CD8-positive, alpha-beta T cell (primary cell): ENCODE measurements at regions of chr6 and their contacts with region 1.

Region 1: GRCh38 chr6:44074439-44075136 is 52.7 kb downstream of the MRPL14 start:
- DNase-seq: peak; percentile 27 to 84 (median 67)
- ATAC-seq: peak; percentile 50
- H3K4me3 ChIP-seq: peak overlapping the region in 1 of 2 experiments; percentile 44
- H3K4me3 Mint-ChIP-seq: peak overlapping the region; percentile 98
- H3K27ac ChIP-seq: no peak overlapping the region
- H3K27ac Mint-ChIP-seq: no peak overlapping the region
- H3K4me1 ChIP-seq: peaks cover 19% of the 10 kb centered on the region
- H3K4me1 Mint-ChIP-seq: peaks cover 19% of the 10 kb centered on the region
- H3K27me3 ChIP-seq: peaks cover 0 to 3% of the 10 kb centered on the region in 2 experiments
- H3K27me3 Mint-ChIP-seq: peaks cover 25% of the 10 kb centered on the region
- CTCF ChIP-seq: peak; percentile 80

Region 2: DNA sequence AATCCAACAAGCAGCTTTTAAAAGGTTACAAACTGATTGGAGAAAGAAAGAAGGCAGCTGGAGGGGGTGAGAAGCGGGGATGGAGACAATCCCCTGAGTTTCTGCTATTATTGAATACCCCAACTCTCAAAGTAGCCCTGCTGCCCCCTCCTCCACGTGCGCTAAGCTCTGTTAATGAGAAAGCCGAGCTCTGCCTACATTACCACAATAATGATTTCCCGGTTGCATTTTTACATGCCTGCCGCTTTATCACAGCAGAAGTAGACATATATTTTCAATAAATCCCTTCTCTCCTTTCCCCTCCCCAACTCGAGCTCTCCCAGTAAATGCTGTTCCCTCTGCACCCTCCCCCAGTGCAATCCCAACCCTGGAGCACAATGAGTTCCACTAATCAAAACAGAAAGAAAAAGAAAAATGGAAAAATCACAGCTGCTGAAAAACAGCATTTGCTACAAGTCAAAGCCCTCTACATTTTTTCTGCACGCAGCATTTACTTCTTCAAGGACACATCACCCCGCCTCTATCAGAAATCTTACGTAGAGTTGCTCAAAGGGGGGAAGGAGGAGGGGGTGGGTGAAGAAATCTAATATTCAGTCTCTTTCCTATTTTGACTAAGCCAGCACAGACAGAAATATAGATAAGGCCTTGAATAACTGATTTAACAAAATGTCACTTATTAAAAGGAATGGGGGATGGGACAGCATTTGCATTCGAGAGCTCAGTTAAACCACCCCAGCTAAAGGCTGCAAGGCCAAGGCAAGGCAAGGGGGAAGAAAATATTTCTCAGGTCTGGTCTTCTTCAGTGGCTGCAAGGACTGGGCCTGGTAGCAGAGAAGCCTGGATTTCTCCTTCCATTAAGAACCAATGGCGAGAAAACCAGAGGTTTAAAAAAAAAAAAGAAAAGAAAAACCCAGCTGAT is 1633.6 kb before region 1 on chr6:
- CTCF ChIA-PET with region 1: no interaction called
- POLR2A ChIA-PET with region 1: no interaction called
- intact Hi-C with region 1: no loop called
- DNase-seq: peak in 1 of 9 experiments; percentile 31
- ATAC-seq: peak; percentile 55
- H3K4me3 ChIP-seq: no peak overlapping the region
- H3K4me3 Mint-ChIP-seq: peak overlapping the region; percentile 38
- H3K27ac ChIP-seq: peak overlapping the region in 1 of 2 experiments; percentile 30
- H3K27ac Mint-ChIP-seq: peak overlapping the region; percentile 79
- H3K4me1 ChIP-seq: peaks cover 40% of the 10 kb centered on the region
- H3K4me1 Mint-ChIP-seq: peaks cover 74% of the 10 kb centered on the region
- H3K27me3 ChIP-seq: no peaks in the 10 kb centered on the region
- H3K27me3 Mint-ChIP-seq: no peaks in the 10 kb centered on the region
- CTCF ChIP-seq: no peak

Region 3: DNA sequence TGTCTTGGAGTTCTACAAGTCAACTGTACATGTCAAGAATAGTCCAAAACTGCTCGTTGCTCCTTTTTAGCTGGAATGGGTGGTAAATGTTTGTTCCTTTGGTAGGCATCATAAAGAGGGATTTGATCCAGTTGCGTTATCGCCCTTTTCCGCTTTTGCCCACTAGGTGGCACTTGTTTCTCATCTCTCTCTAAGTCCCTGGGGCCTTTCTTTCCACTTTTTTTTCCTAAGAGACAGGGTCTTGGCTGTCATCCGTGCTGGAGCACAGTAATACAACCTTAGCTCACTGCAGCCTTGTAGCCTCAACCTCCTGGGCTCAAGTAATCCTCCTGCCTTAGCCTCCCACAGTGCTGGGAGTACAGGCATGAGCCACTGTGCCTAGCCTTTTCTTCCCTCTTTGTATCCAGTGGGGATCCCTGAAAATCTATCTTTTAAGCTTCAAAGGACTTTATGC is 466.3 kb before region 1 on chr6:
- CTCF ChIA-PET with region 1: interaction called, 8 read pairs
- POLR2A ChIA-PET with region 1: no interaction called
- intact Hi-C with region 1: loop called in 1 of 2 experiments (anchors 1 kb)
- DNase-seq: peak; percentile 23 to 75 (median 61)
- ATAC-seq: peak; percentile 38
- H3K4me3 ChIP-seq: no peak overlapping the region
- H3K4me3 Mint-ChIP-seq: no peak overlapping the region
- H3K27ac ChIP-seq: no peak overlapping the region
- H3K27ac Mint-ChIP-seq: no peak overlapping the region
- H3K4me1 ChIP-seq: no peaks in the 10 kb centered on the region
- H3K4me1 Mint-ChIP-seq: peaks cover 3% of the 10 kb centered on the region
- H3K27me3 ChIP-seq: no peaks in the 10 kb centered on the region
- H3K27me3 Mint-ChIP-seq: no peaks in the 10 kb centered on the region
- CTCF ChIP-seq: peak; percentile 63

Region 4: GRCh38 chr6:43723737-43724295 is 350.8 kb before region 1 on chr6:
- CTCF ChIA-PET with region 1: interaction called, 49 read pairs
- POLR2A ChIA-PET with region 1: interaction called, 3 read pairs
- intact Hi-C with region 1: loop called (anchors 1 kb)
- DNase-seq: peak; percentile 40 to 83 (median 69)
- ATAC-seq: peak; percentile 65
- H3K4me3 ChIP-seq: no peak overlapping the region
- H3K4me3 Mint-ChIP-seq: no peak overlapping the region
- H3K27ac ChIP-seq: no peak overlapping the region
- H3K27ac Mint-ChIP-seq: no peak overlapping the region
- H3K4me1 ChIP-seq: peaks cover 25% of the 10 kb centered on the region
- H3K4me1 Mint-ChIP-seq: peaks cover 35% of the 10 kb centered on the region
- H3K27me3 ChIP-seq: no peaks in the 10 kb centered on the region
- H3K27me3 Mint-ChIP-seq: no peaks in the 10 kb centered on the region
- CTCF ChIP-seq: peak; percentile 70

Region 5: DNA sequence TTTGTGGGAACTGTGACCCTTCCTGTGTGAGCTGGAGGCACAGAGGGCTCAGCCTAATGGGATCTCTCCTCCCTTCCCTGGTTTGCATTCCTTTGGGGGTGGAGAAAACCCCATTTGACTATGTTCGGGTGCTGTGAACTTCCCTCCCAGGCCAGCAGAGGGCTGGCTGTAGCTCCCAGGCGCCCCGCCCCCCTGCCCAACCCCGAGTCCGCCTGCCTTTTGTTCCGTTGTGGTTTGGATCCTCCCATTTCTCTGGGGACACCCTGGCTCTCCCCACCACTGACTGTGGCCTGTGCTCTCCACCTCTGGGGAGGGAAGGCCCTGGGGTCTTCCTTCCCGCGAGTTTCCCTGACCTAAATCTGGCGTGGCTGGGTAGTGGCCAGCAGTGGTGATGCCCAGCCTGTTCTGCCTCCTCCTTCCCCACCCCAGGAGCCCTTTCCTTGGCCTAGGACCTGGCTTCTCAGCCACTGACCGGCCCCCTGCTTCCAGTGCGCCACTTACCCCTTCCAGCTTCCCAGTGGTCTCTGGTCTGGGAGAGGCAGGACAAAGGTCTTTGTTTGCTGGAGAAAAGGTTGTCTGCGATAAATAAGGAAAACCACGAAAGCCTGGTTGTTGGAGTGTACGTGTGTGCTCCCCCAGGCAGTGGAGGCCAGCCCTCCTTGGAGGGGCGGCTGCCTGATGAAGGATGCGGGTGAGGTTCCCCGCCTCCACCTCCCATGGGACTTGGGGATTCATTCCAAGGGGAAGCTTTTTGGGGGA is 299.6 kb before region 1 on chr6:
- CTCF ChIA-PET with region 1: interaction called, 153 read pairs
- POLR2A ChIA-PET with region 1: interaction called, 3 read pairs
- intact Hi-C with region 1: no loop called
- DNase-seq: peak in 8 of 9 experiments; percentile 27 to 76 (median 56)
- ATAC-seq: peak; percentile 24
- H3K4me3 ChIP-seq: no peak overlapping the region
- H3K4me3 Mint-ChIP-seq: no peak overlapping the region
- H3K27ac ChIP-seq: no peak overlapping the region
- H3K27ac Mint-ChIP-seq: no peak overlapping the region
- H3K4me1 ChIP-seq: peaks cover 9% of the 10 kb centered on the region
- H3K4me1 Mint-ChIP-seq: peaks cover 12% of the 10 kb centered on the region
- H3K27me3 ChIP-seq: peaks cover 0 to 20% of the 10 kb centered on the region in 2 experiments
- H3K27me3 Mint-ChIP-seq: peaks cover 25% of the 10 kb centered on the region
- CTCF ChIP-seq: peak; percentile 70

Region 6: DNA sequence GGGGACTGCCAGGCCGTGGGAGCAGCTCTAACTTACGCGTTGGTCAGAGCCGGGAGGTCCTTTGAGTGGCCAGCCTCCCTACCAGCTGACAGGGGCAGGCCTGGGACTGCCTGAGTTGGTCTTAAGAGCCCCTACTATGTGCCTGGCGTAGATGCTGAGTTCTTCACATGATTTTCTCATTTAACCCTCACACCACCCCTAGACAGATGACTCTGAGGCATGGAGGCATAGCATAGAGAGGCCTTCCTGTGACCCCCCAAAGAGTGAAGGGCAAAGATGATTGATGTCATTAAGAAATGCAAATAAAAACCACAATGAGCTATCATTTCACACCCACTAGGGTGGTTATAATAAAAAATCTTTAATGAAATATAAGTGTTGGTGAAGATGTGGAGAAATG is 15.9 kb after region 1 on chr6:
- CTCF ChIA-PET with region 1: interaction called, 23 read pairs
- POLR2A ChIA-PET with region 1: no interaction called
- intact Hi-C with region 1: no loop called
- DNase-seq: no peak
- ATAC-seq: no peak
- H3K4me3 ChIP-seq: no peak overlapping the region
- H3K4me3 Mint-ChIP-seq: no peak overlapping the region
- H3K27ac ChIP-seq: no peak overlapping the region
- H3K27ac Mint-ChIP-seq: no peak overlapping the region
- H3K4me1 ChIP-seq: no peaks in the 10 kb centered on the region
- H3K4me1 Mint-ChIP-seq: no peaks in the 10 kb centered on the region
- H3K27me3 ChIP-seq: no peaks in the 10 kb centered on the region
- H3K27me3 Mint-ChIP-seq: no peaks in the 10 kb centered on the region
- CTCF ChIP-seq: no peak

Region 7: DNA sequence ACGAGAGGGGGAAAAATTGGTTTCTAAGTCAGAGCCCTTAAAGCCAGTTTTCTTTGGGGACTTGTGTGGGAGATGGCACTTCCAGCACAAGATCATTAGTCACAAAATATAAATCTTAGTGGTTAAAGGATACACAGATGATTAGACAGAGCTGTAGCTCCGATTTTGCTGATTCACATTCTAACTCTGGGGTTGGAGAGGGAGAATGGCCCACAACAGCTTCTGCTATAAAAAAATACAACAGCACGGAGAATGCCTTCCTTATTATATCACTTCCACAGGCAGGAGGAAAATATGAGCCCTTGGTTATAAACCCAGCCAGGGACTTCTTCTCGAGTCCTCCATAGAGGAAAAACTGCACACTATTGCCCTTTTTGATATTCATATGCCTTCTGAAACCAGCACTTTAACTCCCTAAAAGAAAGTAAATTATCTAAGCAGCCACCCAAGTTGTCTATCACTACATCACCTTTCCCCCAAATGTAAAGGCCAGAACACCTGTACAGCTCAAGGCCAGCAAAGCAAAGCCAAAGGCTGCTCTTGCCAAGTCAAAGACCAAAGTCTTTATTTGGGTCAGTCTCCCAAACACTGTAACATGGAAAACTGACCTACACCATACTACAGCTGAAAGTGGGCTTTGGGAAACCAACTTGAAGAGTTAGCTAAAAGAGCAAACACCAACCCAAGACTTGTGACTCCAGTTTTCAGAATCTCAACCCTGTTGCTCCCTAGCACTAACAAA is 42.2 kb after region 1 on chr6:
- CTCF ChIA-PET with region 1: no interaction called
- POLR2A ChIA-PET with region 1: no interaction called
- intact Hi-C with region 1: no loop called
- DNase-seq: no peak
- ATAC-seq: no peak
- H3K4me3 ChIP-seq: no peak overlapping the region
- H3K4me3 Mint-ChIP-seq: no peak overlapping the region
- H3K27ac ChIP-seq: no peak overlapping the region
- H3K27ac Mint-ChIP-seq: peak overlapping the region; percentile 72
- H3K4me1 ChIP-seq: peaks cover 16% of the 10 kb centered on the region
- H3K4me1 Mint-ChIP-seq: peaks cover 56% of the 10 kb centered on the region
- H3K27me3 ChIP-seq: no peaks in the 10 kb centered on the region
- H3K27me3 Mint-ChIP-seq: no peaks in the 10 kb centered on the region
- CTCF ChIP-seq: no peak